Activated naive CD4-positive, alpha-beta T cell treated with anti-CD3 and anti-CD28 coated beads for 36 hours (primary cell): ENCODE measurements at regions of chr12 and their contacts with region 1.

Region 1: DNA sequence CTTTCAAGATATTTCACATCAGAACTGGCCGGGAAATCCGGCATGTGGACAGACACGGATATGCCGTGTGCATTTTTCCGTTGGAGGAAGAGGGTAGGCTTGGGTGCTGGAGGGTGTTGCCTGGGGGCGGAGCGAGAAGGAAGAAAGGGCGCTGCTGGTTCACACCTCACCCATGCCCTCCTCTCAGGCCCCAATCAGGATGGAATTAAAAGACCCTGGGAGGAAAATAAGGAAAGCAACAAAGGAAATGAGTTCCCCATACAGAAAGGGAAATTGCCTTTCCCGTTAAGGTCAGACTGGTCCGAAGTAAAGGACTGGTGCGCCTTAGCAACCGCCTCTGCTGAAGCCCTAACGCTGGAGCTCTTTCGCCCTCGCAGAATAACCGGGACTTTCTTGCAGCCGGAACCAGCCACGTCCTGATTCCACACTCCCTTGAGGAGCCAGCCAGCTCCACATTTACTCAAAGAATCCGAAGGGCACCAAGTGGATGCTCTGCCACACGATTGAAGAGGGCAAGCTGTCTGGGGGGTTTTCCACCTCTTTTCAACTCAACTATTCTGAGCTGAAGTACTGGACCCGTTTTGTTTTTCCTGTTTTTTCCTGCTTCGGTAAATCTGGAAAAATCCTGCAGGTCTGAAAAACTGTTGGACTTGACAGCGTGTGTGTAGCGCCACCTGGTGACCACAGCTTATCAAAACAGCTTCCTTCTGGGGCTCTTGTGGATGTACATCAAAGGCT is 37.7 kb upstream of the BCL2L14 start:
- DNase-seq: peak; percentile 86
- H3K4me3 Mint-ChIP-seq: peak overlapping the region; percentile 66
- H3K27ac Mint-ChIP-seq: peak overlapping the region; percentile 78
- H3K4me1 Mint-ChIP-seq: peaks cover 46% of the 10 kb centered on the region
- H3K27me3 Mint-ChIP-seq: no peaks in the 10 kb centered on the region

Region 2: DNA sequence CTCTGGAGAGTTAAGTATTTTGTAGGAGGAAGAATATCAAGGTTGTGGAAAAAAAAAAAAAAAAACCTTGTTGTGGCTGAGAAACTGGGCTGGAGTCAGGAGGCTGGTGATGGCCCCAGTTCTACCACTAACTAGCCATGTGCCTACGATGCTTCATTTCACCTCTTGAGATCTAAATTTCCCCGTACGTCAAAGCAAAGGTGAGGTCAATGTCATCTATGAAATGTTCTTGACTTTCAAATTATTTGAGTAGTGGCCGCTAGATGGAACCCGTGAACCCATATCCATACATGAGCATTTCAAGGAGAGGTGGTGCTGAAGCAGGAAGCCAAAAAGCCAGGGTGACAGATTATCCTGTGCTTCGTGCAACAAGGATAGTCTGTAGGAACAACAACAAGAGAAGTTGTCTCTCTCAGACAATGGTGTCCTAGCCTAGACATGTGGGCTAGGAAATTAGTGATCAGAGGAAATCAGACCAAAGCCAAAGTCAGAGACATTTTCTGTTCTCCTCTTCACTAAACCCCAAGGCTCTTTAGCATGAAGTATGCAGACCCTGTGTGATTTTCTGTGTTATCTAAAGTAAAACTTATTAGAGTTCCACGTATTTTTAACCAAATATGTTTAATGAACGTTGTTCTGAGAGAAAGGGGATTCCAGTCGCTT is 479.0 kb before region 1 on chr12:
- CTCF ChIA-PET with region 1: interaction called, 14 read pairs
- intact Hi-C with region 1: loop called (anchors 1 kb)
- DNase-seq: peak; percentile 79
- H3K4me3 Mint-ChIP-seq: no peak overlapping the region
- H3K27ac Mint-ChIP-seq: no peak overlapping the region
- H3K4me1 Mint-ChIP-seq: peaks cover 22% of the 10 kb centered on the region
- H3K27me3 Mint-ChIP-seq: no peaks in the 10 kb centered on the region

Region 3: DNA sequence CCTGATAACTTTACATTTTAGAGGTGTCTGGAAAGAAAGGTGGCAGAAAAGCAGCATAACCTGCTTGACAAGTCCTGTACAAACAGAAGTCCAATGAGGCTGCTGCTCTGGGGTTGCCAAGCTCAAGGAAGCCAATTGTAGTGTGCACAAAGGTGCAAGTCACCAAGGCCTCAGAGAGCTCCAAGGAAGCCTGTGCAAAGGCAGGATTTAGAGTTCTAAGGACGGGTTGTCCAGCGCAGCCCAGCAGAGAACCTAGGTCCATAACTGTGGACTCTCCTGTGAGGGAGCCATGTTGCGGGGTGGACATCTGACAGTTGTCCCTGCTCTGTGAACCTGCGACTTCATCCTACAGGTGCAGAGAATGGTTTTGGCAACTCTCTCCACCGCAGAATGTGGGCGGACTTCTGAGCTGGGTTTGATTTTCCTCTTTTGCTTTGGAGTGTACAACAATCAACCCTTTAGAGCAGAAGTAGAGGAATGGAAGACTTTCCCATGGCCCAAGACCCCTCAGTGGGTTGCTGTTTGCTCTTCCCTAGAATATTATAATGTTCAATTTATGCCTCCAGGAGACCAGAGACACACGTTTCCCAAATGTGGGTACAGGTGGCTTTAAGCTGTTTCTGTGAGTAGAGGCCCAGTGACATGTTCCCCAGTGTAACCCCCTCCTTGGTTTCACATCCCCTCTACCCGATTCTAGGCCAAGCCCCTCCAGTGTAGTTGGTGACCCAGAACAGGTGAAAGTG is 302.6 kb before region 1 on chr12:
- CTCF ChIA-PET with region 1: interaction called, 14 read pairs
- intact Hi-C with region 1: no loop called
- DNase-seq: peak; percentile 27
- H3K4me3 Mint-ChIP-seq: no peak overlapping the region
- H3K27ac Mint-ChIP-seq: peak overlapping the region; percentile 85
- H3K4me1 Mint-ChIP-seq: peaks cover 86% of the 10 kb centered on the region
- H3K27me3 Mint-ChIP-seq: no peaks in the 10 kb centered on the region

Region 4: DNA sequence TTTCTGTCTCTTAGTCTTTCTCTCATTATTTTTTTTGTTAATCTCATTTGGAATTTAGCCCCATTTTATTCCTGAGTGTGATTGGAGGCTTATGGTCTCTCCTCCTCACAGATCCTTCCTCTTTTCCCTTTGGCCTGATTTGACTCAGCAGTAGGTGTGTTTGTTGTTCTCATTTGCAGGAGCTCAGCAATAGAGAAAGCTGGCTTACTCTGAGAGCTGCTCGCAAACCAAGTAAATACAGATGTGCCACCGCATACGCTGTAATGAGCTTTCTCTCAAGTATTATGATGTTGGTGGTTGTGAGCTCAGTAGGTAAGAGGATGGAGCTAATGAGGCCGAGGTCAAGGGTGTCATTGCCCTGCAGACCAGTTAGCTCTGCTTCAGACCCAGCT is 177.0 kb before region 1 on chr12:
- CTCF ChIA-PET with region 1: interaction called, 13 read pairs
- intact Hi-C with region 1: no loop called
- DNase-seq: no peak
- H3K4me3 Mint-ChIP-seq: no peak overlapping the region
- H3K27ac Mint-ChIP-seq: peak overlapping the region; percentile 10
- H3K4me1 Mint-ChIP-seq: peaks cover 33% of the 10 kb centered on the region
- H3K27me3 Mint-ChIP-seq: no peaks in the 10 kb centered on the region

Region 5: GRCh38 chr12:12008931-12009611 is 23.9 kb before region 1 on chr12:
- CTCF ChIA-PET with region 1: interaction called, 60 read pairs
- intact Hi-C with region 1: loop called (anchors 1 kb)
- DNase-seq: peak; percentile 87
- H3K4me3 Mint-ChIP-seq: peak overlapping the region; percentile 25
- H3K27ac Mint-ChIP-seq: peak overlapping the region; percentile 99
- H3K4me1 Mint-ChIP-seq: peaks cover 74% of the 10 kb centered on the region
- H3K27me3 Mint-ChIP-seq: no peaks in the 10 kb centered on the region

Region 6: GRCh38 chr12:12611512-12612306 is 578.7 kb after region 1 on chr12 and contains the start of gene CREBL2:
- CTCF ChIA-PET with region 1: no interaction called
- intact Hi-C with region 1: loop called (anchors 1 kb)
- DNase-seq: peak; percentile 90
- H3K4me3 Mint-ChIP-seq: peak within 1 kb of the TSS; percentile 88
- H3K27ac Mint-ChIP-seq: peak within 1 kb of the TSS; percentile 99
- H3K4me1 Mint-ChIP-seq: peaks cover 59% of the 10 kb centered on the region
- H3K27me3 Mint-ChIP-seq: no peaks in the 10 kb centered on the region
- total RNA-seq, gene CREBL2: 15.6 to 16.1 TPM